AG04450 (cell line): ENCODE measurements at regions of chr13 and their contacts with region 1.

Region 1: GRCh38 chr13:111066544-111066943 is 48.6 kb upstream of the ARHGEF7 start:
- DNase-seq: no peak
- H3K4me3 ChIP-seq: no peak overlapping the region
- H3K27ac ChIP-seq: no peak overlapping the region
- H3K27me3 ChIP-seq: peaks cover 24% of the 10 kb centered on the region
- CTCF ChIP-seq: no peak

Region 2: GRCh38 chr13:110944121-110944967 is 122.2 kb before region 1 on chr13:
- CTCF ChIA-PET with region 1: interaction called, 12 read pairs
- POLR2A ChIA-PET with region 1: no interaction called
- DNase-seq: peak; percentile 20
- H3K4me3 ChIP-seq: no peak overlapping the region
- H3K27ac ChIP-seq: no peak overlapping the region
- H3K27me3 ChIP-seq: no peaks in the 10 kb centered on the region
- CTCF ChIP-seq: peak; percentile 76

Region 3: GRCh38 chr13:111046590-111047141 is 19.9 kb before region 1 on chr13:
- CTCF ChIA-PET with region 1: interaction called, 12 read pairs
- POLR2A ChIA-PET with region 1: no interaction called
- DNase-seq: peak; percentile 26
- H3K4me3 ChIP-seq: no peak overlapping the region
- H3K27ac ChIP-seq: peak overlapping the region; percentile 42
- H3K27me3 ChIP-seq: peaks cover 3% of the 10 kb centered on the region
- CTCF ChIP-seq: peak; percentile 60

Region 4: GRCh38 chr13:111158136-111158805 is 91.7 kb after region 1 on chr13:
- CTCF ChIA-PET with region 1: interaction called, 17 read pairs
- POLR2A ChIA-PET with region 1: no interaction called
- DNase-seq: no peak
- H3K4me3 ChIP-seq: no peak overlapping the region
- H3K27ac ChIP-seq: no peak overlapping the region
- H3K27me3 ChIP-seq: no peaks in the 10 kb centered on the region
- CTCF ChIP-seq: no peak

Region 5: DNA sequence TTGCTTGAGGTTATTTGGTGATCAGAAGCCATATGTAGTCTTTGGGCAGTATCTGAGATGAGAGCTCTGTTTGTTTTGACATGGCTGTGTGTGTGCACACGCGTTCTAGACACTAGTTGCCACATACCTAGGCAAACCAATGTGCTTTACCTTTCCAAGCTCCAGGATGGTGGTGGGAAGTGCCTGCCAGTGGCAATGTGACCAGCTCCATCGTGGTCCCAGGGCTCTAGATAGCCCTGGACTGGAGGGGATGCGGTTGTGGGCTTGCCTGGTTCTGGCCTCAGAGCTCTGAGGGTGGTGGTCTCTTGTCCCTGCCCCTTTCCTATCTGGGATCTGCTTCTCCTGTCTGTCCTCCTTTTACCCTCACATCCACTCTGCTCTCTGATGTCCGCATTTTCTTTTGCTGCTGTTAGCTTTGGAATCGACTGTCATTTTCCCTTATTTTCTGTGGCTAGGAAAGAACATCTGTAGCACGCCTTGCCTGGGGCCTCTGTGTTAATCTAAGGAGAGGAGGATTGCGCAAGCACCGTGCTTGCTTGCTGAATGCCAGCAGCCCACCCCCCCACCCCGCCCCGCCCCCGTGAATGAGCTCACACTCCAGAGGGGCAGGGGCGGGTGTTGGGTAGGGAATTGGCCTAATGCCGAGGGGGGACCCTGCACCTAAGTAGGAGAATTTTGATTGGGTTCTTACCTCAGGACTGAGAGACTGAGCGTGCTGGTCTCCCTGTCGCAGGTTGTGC is 138.1 kb after region 1 on chr13:
- CTCF ChIA-PET with region 1: interaction called, 11 read pairs
- POLR2A ChIA-PET with region 1: no interaction called
- DNase-seq: peak; percentile 55
- H3K4me3 ChIP-seq: peak overlapping the region; percentile 48
- H3K27ac ChIP-seq: peak overlapping the region; percentile 80
- H3K27me3 ChIP-seq: no peaks in the 10 kb centered on the region
- CTCF ChIP-seq: no peak

Region 6: DNA sequence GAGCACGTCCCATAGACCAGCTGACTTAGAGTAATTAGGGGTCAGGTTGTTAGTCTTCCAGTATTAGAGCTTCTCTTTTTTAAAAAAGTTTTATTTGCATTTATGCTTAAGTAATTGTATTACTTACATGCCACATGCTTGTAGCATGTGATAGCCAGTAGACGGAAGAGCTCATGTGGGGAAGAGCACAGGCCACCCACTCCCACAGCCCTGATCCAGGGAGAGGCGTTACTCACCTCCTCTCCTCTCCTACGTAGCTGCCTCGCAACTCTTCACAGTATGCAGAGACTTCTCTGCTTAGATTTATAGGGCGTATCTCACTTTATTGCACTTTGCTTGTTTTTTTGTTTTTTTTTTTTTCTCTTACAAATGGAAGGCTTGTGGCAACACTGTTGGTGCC is 158.6 kb after region 1 on chr13:
- CTCF ChIA-PET with region 1: interaction called, 15 read pairs
- POLR2A ChIA-PET with region 1: no interaction called
- DNase-seq: no peak
- H3K4me3 ChIP-seq: no peak overlapping the region
- H3K27ac ChIP-seq: no peak overlapping the region
- H3K27me3 ChIP-seq: no peaks in the 10 kb centered on the region
- CTCF ChIP-seq: no peak

Region 7: DNA sequence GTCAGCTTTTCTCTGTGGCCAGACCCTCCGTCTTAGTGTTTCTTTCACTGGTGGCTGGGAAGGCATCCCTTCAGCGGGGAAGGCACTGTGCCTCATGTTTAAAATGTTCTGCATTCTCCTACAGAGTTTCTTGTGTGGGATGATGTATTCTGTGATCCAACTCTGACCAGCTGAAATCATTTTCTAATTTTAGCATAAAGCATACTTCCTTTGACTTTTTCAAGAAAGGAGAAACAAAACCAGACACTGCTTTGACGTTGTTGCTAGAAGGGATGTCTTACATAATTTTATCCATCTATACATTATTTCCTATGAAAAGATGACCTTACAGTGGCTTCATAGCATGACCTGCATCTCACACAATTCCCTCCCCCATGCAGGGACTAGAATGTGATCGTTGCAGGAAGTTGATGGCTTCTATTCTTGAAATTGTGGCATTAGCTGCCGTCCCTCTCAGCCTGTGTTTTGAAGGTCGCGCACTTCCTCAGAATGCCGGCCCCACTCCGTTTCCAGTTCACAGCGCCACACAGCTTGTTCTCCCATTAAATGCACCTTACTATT is 215.3 kb after region 1 on chr13:
- CTCF ChIA-PET with region 1: interaction called, 12 read pairs
- POLR2A ChIA-PET with region 1: no interaction called
- DNase-seq: peak; percentile 61
- H3K4me3 ChIP-seq: peak overlapping the region; percentile 8
- H3K27ac ChIP-seq: peak overlapping the region; percentile 98
- H3K27me3 ChIP-seq: no peaks in the 10 kb centered on the region
- CTCF ChIP-seq: no peak

Region 8: DNA sequence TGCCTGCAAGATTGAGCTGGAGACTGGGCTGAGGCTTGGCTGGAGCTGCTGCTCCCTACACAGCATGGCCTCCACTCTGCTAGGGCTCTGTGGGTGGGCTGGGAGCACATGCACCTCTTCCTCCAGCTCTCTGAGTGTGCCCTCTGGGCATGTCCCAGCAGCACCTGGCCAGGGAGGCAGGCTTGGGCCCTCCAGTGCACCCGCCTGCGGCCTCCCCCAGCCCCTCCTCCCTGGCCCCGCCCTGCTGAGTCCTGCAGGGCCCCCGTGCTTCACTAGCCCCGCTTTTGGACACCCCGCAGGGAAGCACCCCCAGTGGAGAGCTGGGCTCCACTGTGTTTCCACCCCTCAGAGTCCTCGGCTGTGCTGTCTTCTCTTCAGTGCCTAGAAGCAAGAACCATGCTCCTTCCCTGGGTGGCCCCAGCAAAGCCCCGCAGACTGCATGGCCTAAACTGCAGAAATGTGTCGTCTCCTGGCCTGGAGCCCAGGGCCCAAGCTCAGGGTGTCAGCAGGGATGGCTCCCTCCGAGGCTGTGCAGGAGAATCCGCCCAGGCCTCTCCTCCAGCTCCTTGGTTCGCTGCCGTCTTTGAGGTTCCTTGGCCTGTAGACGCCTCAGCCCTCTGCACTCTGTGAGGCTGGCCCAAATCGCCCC is 248.9 kb after region 1 on chr13:
- CTCF ChIA-PET with region 1: no interaction called
- POLR2A ChIA-PET with region 1: no interaction called
- DNase-seq: no peak
- H3K4me3 ChIP-seq: no peak overlapping the region
- H3K27ac ChIP-seq: no peak overlapping the region
- H3K27me3 ChIP-seq: no peaks in the 10 kb centered on the region
- CTCF ChIP-seq: no peak